Mammary epithelial cell (primary cell): ENCODE measurements at regions of chr5 and their contacts with region 1.

Region 1: GRCh38 chr5:178786859-178787760 is 56.7 kb upstream of the ZNF354A start:
- DNase-seq: peak; percentile 87
- H3K4me3 ChIP-seq: no peak overlapping the region
- H3K27ac ChIP-seq: no peak overlapping the region
- H3K4me1 ChIP-seq: no peaks in the 10 kb centered on the region
- H3K27me3 ChIP-seq: no peaks in the 10 kb centered on the region
- CTCF ChIP-seq: peak in 1 of 2 donors; percentile 2

Region 2: GRCh38 chr5:178818094-178818493 is 31.0 kb after region 1 on chr5:
- CTCF ChIA-PET with region 1: no interaction called
- dilution Hi-C with region 1: no loop called
- in situ Hi-C with region 1: no loop called
- intact Hi-C with region 1: no loop called
- DNase-seq: no peak
- H3K4me3 ChIP-seq: no peak overlapping the region
- H3K27ac ChIP-seq: no peak overlapping the region
- H3K4me1 ChIP-seq: no peaks in the 10 kb centered on the region
- H3K27me3 ChIP-seq: no peaks in the 10 kb centered on the region
- CTCF ChIP-seq: no peak

Region 3: DNA sequence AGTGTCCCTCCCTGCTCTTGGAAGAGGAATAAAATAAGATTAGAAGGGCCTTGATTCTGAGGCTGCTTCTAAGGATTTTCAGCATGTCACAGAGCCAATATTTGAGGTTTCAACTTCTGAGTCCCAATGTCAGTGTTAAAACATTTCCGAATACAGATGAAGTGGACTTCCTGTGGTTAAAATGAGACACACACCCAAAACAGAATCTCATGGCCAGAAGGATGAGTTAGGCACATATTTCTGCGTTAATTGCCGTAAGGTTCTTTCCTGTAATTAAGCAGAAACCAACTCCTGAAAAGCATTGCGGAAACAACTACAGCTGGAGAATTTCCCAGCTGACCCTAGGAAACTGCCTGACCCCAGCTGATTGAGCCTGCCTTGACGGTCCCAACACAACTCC is 62.2 kb after region 1 on chr5:
- CTCF ChIA-PET with region 1: interaction called, 4 read pairs
- dilution Hi-C with region 1: loop called (anchors 10 kb)
- in situ Hi-C with region 1: no loop called
- intact Hi-C with region 1: no loop called
- DNase-seq: no peak
- H3K4me3 ChIP-seq: no peak overlapping the region
- H3K27ac ChIP-seq: no peak overlapping the region
- H3K4me1 ChIP-seq: no peaks in the 10 kb centered on the region
- H3K27me3 ChIP-seq: no peaks in the 10 kb centered on the region
- CTCF ChIP-seq: no peak

Region 4: GRCh38 chr5:179438011-179438441 is 650.9 kb after region 1 on chr5:
- CTCF ChIA-PET with region 1: no interaction called
- dilution Hi-C with region 1: loop called (anchors 10 kb)
- in situ Hi-C with region 1: no loop called
- intact Hi-C with region 1: no loop called
- DNase-seq: no peak
- H3K4me3 ChIP-seq: no peak overlapping the region
- H3K27ac ChIP-seq: no peak overlapping the region
- H3K4me1 ChIP-seq: no peaks in the 10 kb centered on the region
- H3K27me3 ChIP-seq: no peaks in the 10 kb centered on the region
- CTCF ChIP-seq: no peak